Caco-2 (cell line): ENCODE measurements at regions of chr22 and their contacts with region 1.

Region 1: GRCh38 chr22:39520054-39520891 is at the start of gene ATF4:
- DNase-seq: peak; percentile 97 to 98
- H3K4me3 ChIP-seq: peak within 1 kb of the TSS; percentile 91
- H3K4me3 Mint-ChIP-seq: peak within 1 kb of the TSS; percentile 79
- H3K27ac Mint-ChIP-seq: peak within 1 kb of the TSS; percentile 98
- H3K4me1 ChIP-seq: peaks cover 26% of the 10 kb centered on the region
- H3K4me1 Mint-ChIP-seq: peaks cover 38% of the 10 kb centered on the region
- H3K27me3 ChIP-seq: no peaks in the 10 kb centered on the region
- H3K27me3 Mint-ChIP-seq: no peaks in the 10 kb centered on the region
- CTCF ChIP-seq: no peak
- total RNA-seq, gene ATF4: 610 and 647 TPM in 2 replicates

Region 2: GRCh38 chr22:39319270-39320022 is 200.8 kb before region 1 on chr22 and contains the start of gene RPL3:
- CTCF ChIA-PET with region 1: interaction called, 7 read pairs
- POLR2A ChIA-PET with region 1: interaction called, 14 read pairs
- intact Hi-C with region 1: loop called (anchors 5 kb)
- DNase-seq: peak; percentile 93 to 97
- H3K4me3 ChIP-seq: peak within 1 kb of the TSS; percentile 67
- H3K4me3 Mint-ChIP-seq: peak within 1 kb of the TSS; percentile 96
- H3K27ac Mint-ChIP-seq: peak within 1 kb of the TSS; percentile 100
- H3K4me1 ChIP-seq: peaks cover 20% of the 10 kb centered on the region
- H3K4me1 Mint-ChIP-seq: peaks cover 8% of the 10 kb centered on the region
- H3K27me3 ChIP-seq: no peaks in the 10 kb centered on the region
- H3K27me3 Mint-ChIP-seq: peaks cover 4% of the 10 kb centered on the region
- CTCF ChIP-seq: no peak
- total RNA-seq, gene RPL3: 1,668 and 1,699 TPM in 2 replicates

Region 3: DNA sequence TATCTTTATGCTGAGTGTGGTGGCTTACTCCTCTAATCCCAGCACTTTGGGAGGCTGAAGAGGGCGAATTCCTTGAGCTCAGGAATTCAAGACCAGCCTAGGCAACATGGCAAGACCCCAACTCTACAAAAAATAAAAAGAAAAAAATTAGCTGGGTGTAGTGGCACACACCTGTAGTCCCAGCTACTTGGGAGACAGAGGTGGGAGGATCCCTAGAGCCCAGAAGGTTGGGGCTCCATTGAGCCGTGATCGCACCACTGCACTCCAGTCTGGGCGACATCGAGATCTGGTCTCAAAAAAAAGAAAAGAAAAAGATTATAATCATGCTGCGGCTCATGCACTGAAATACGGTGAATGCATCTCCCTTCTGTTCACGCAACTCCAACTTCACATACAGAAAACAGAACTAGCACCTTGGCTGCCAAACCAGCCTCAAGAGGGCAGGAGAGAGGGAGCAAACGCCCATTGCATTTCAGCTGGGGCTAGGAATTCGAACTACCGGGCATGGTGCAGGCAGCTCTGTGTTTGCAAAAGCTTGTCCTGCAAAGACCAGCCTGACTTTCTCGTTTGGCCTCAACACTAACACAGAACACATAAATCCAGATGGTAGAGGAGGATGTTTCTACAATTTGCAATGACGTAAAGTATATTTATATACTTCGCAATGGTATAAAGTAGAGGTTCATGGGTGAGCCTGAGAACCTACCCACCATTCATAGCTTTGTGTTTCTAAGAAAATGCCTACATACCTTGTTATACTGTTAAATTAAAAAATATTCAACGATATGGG is 176.8 kb before region 1 on chr22:
- CTCF ChIA-PET with region 1: no interaction called
- POLR2A ChIA-PET with region 1: no interaction called
- intact Hi-C with region 1: loop called (anchors 10 kb)
- DNase-seq: peak; percentile 82 to 84
- H3K4me3 ChIP-seq: no peak overlapping the region
- H3K4me3 Mint-ChIP-seq: no peak overlapping the region
- H3K27ac Mint-ChIP-seq: peak overlapping the region; percentile 53
- H3K4me1 ChIP-seq: peaks cover 10% of the 10 kb centered on the region
- H3K4me1 Mint-ChIP-seq: peaks cover 12% of the 10 kb centered on the region
- H3K27me3 ChIP-seq: no peaks in the 10 kb centered on the region
- H3K27me3 Mint-ChIP-seq: no peaks in the 10 kb centered on the region
- CTCF ChIP-seq: peak; percentile 68 to 90

Region 4: GRCh38 chr22:39496131-39496838 is 24.0 kb before region 1 on chr22:
- CTCF ChIA-PET with region 1: interaction called, 6 read pairs
- POLR2A ChIA-PET with region 1: interaction called, 11 read pairs
- intact Hi-C with region 1: no loop called
- DNase-seq: peak in 1 of 2 experiments; percentile 55
- H3K4me3 ChIP-seq: no peak overlapping the region
- H3K4me3 Mint-ChIP-seq: no peak overlapping the region
- H3K27ac Mint-ChIP-seq: no peak overlapping the region
- H3K4me1 ChIP-seq: peaks cover 6% of the 10 kb centered on the region; the same call in 1 of the 2 replicates
- H3K4me1 Mint-ChIP-seq: peaks cover 30% of the 10 kb centered on the region
- H3K27me3 ChIP-seq: no peaks in the 10 kb centered on the region
- H3K27me3 Mint-ChIP-seq: no peaks in the 10 kb centered on the region
- CTCF ChIP-seq: peak; percentile 48 to 55

Region 5: GRCh38 chr22:39502109-39502788 is 18.0 kb before region 1 on chr22 and contains the start of gene MIEF1:
- CTCF ChIA-PET with region 1: interaction called, 9 read pairs
- POLR2A ChIA-PET with region 1: interaction called, 27 read pairs
- intact Hi-C with region 1: loop called (anchors 2 kb)
- DNase-seq: peak; percentile 96 to 97
- H3K4me3 ChIP-seq: peak within 1 kb of the TSS; percentile 94
- H3K4me3 Mint-ChIP-seq: peak within 1 kb of the TSS; percentile 78
- H3K27ac Mint-ChIP-seq: peak within 1 kb of the TSS; percentile 62
- H3K4me1 ChIP-seq: peaks cover 6% of the 10 kb centered on the region
- H3K4me1 Mint-ChIP-seq: peaks cover 29% of the 10 kb centered on the region
- H3K27me3 ChIP-seq: no peaks in the 10 kb centered on the region
- H3K27me3 Mint-ChIP-seq: no peaks in the 10 kb centered on the region
- CTCF ChIP-seq: no peak
- total RNA-seq, gene MIEF1: 47.4 and 49.4 TPM in 2 replicates